OCI-LY7 (cell line): ENCODE measurements at regions of chr18 and their contacts with region 1.

Region 1: DNA sequence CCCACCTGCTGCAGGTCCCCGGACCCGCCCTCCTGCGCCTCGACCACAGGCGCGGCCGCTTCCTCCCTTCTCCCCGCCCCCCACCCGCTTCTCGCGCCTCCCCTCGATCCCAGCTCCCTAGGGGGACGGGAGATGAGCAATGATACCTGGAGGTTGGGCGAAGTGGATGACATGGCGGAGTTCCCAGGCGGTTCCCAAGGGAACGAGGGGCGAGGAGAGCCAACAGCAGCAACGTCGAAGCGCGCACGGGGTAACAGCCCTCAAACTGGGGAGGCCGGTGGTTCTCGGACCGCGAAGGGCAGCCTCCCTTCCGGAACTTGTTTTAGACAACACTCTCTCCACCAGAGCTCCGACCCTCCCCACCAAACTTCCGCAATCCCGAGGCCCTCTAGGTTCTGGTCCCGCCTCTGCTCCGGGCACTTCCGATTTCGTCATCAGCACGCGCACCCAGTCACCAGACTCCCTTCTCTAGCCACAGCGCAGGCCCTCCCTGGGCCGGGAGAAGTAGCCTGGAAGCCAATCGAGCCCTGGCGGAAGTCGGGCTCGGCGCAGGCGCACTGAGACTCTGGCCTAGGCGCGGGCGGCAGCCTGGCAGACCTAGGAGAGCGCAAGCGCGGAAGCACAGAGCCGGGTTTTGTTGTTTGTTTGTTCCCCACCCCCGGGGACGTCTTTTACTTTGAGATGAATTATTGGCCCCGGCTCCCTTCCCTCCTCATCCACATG is at the start of gene VPS4B:
- DNase-seq: peak; percentile 95
- H3K4me3 ChIP-seq: peak within 1 kb of the TSS; percentile 80
- H3K27ac ChIP-seq: peak within 1 kb of the TSS; percentile 67
- H3K4me1 ChIP-seq: peaks cover 7% of the 10 kb centered on the region
- CTCF ChIP-seq: no peak
- total RNA-seq, gene VPS4B: 10.7 and 12.3 TPM in 2 replicates

Region 2: DNA sequence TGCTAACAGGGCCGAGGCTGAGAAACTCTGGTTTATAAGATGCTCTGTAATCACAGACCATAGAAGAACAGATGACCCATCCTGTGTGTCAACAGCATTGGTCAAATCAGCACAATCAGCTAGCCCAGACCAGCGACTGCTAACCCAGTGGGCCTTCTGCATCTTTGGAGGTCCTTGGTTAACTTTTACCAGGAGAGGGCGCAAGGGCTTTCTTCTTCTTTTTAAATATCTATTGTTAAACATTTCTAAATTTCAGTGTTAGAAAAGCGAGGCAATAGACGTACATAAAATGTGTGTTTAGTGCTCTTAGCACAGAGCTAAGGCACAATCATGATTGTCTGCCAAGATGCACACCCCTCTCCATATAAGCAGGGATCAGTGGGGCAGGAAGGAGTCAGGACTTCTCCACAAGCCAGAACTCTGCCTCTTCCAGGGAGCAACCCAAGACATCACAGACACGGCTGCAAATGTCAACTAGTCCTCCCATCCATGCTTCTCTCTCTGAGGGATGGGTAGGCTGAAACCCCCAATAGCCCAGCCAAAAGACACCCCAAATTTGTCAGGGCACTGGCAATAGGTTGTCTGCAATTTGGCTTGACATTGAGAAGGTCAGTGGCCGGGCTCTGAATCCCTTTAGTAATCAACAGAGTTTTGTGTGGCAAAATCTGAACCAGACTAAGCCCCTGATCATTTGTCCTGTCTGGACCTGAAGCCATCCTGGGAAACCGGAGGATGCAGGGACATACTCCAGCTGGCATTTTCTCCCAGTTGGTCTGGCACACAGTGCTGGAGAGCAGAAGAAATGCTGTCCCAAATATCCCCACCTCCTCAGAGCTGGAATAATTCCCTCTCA is 290.9 kb before region 1 on chr18:
- CTCF ChIA-PET with region 1: no interaction called
- POLR2A ChIA-PET with region 1: no interaction called
- intact Hi-C with region 1: loop called (anchors 10 kb)
- DNase-seq: peak; percentile 50
- H3K4me3 ChIP-seq: no peak overlapping the region
- H3K27ac ChIP-seq: no peak overlapping the region
- H3K4me1 ChIP-seq: peaks cover 4% of the 10 kb centered on the region
- CTCF ChIP-seq: peak; percentile 77

Region 3: DNA sequence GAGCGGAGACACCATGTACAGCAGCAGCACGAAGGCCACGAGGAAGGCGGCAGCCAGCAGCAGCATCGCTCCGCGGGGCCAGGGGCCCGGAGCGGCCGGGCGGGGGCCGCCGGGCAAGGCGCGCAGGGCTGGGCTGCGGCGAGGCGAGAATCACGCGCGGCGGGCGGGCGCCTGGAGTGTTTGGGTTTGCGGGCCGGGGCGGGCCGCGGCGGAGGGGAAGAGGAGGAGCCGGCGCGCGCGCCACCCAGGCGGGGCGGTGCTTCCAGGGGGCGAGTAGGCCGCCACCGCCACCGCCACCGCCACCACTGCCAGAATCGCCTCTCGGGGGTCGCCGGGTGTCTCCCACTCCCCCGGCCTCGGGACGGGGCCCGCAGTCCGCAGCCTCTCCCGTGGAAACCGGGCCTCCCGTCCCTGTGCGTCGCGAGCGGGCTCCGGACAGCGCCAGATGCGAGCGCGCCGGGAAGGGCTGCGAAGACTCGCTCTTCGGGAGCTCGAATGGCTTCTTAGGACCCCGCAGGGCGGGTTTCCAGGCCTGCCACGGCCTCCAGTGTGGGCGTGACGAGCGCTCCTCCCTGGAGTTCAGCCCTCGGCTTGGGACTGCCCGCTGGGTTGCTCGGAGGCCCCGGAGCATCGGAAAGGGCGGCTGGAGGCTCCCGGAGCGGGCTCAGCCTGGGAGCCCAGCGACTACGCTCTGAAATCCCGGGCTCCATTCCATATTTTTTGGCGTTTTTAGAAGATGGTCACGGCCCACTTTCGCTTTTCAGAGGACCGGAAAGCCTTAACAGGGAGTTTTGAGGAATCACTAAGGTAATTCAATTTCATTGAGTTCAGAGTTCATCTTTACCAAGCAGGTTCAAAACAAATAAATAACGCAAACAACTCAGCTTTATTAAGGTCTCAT is 54.9 kb before region 1 on chr18 and contains the start of gene KDSR:
- CTCF ChIA-PET with region 1: no interaction called
- POLR2A ChIA-PET with region 1: interaction called, 3 read pairs
- intact Hi-C with region 1: loop called (anchors 2 kb)
- DNase-seq: peak; percentile 65
- H3K4me3 ChIP-seq: peak within 1 kb of the TSS; percentile 85
- H3K27ac ChIP-seq: no peak within 1 kb of the TSS
- H3K4me1 ChIP-seq: no peaks in the 10 kb centered on the region
- CTCF ChIP-seq: no peak
- total RNA-seq, gene KDSR: 6.5 and 7.1 TPM in 2 replicates

Region 4: GRCh38 chr18:63472380-63472779 is 50.1 kb after region 1 on chr18:
- CTCF ChIA-PET with region 1: no interaction called
- POLR2A ChIA-PET with region 1: no interaction called
- intact Hi-C with region 1: no loop called
- DNase-seq: no peak
- H3K4me3 ChIP-seq: no peak overlapping the region
- H3K27ac ChIP-seq: no peak overlapping the region
- H3K4me1 ChIP-seq: no peaks in the 10 kb centered on the region
- CTCF ChIP-seq: no peak